CD4-positive, alpha-beta T cell (primary cell): ENCODE measurements at regions of chr7 and their contacts with region 1.

Region 1: DNA sequence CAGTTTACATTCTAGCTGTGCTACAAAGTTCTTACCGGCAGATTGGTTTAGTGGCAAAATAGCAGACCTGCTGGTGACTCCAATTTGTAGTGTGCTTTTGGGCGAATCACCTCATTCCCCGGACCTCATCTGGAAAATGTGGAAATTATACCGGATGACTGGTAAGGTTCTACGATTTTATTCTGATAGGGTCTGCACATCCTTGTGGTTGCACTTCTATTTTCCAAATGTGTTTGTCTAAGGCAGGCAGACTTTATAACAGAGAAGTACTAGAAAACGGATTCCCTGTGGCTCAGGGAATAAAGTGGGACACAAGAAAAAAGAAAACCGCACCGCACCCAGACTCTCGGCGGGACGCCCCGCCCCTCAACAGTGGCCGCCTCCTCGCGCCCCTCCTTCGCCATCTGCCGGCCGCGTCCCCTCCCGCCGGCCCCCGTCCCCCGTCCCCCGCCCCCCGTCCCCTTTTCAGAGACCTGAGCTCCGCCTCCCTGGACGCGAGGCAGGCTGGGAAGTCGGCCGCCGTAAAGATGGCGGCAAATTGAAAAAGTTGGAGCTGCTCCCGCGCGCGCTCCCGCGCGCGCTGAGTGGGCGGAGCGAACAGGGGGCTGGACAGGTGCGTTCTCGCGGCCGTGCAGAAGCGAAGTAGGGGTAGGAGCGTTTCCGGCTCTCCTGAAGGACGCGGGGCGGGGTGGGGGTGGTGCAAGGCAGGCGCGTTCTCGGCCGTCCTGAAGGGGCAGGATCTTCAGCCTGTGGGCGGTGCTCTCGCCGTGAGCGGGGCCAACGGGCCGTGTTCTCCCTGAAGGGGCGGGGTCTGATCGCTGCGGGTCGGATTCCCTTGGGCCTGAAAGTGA is 531 bp upstream of the CCM2 start:
- DNase-seq: peak; percentile 98 to 100 (median 99)
- ATAC-seq: peak; percentile 79
- H3K4me3 ChIP-seq: peak overlapping the region; percentile 69
- H3K4me3 Mint-ChIP-seq: peak overlapping the region; percentile 99
- H3K27ac ChIP-seq: peak overlapping the region; percentile 76 to 78
- H3K27ac Mint-ChIP-seq: peak overlapping the region; percentile 99
- H3K4me1 ChIP-seq: peaks cover 58% of the 10 kb centered on the region
- H3K4me1 Mint-ChIP-seq: peaks cover 52% of the 10 kb centered on the region
- H3K27me3 ChIP-seq: no peaks in the 10 kb centered on the region
- H3K27me3 Mint-ChIP-seq: no peaks in the 10 kb centered on the region
- CTCF ChIP-seq: no peak

Region 2: DNA sequence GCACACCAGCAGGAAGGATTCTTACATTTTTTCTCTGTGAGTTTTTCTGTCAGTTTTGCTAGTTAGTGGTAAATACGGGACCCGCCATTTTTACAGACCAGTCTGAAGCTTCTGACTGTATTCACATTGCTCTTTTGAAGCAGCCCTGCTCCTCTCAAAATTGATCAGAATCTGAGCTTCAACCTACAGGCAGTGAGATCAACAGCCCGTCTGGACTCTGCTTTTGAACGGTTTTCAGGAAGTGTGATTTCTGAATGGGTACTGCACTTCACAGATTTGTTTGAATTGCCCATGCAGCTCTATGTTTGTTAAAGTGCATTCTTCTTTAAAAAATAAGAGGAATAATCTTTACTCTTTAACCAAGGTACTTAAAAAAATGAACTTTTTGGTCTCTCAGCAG is 123.1 kb before region 1 on chr7:
- CTCF ChIA-PET with region 1: no interaction called
- POLR2A ChIA-PET with region 1: no interaction called
- intact Hi-C with region 1: no loop called
- DNase-seq: no peak
- ATAC-seq: no peak
- H3K4me3 ChIP-seq: no peak overlapping the region
- H3K4me3 Mint-ChIP-seq: no peak overlapping the region
- H3K27ac ChIP-seq: no peak overlapping the region
- H3K27ac Mint-ChIP-seq: peak overlapping the region; percentile 27
- H3K4me1 ChIP-seq: peaks cover 3% of the 10 kb centered on the region
- H3K4me1 Mint-ChIP-seq: peaks cover 27% of the 10 kb centered on the region
- H3K27me3 ChIP-seq: no peaks in the 10 kb centered on the region
- H3K27me3 Mint-ChIP-seq: no peaks in the 10 kb centered on the region
- CTCF ChIP-seq: no peak

Region 3: GRCh38 chr7:44973610-44974401 is 25.7 kb before region 1 on chr7:
- CTCF ChIA-PET with region 1: interaction called, 62 read pairs
- POLR2A ChIA-PET with region 1: interaction called, 104 read pairs
- intact Hi-C with region 1: loop called in 1 of 2 experiments (anchors 1 kb)
- DNase-seq: peak; percentile 45 to 78 (median 65)
- ATAC-seq: peak; percentile 48
- H3K4me3 ChIP-seq: no peak overlapping the region
- H3K4me3 Mint-ChIP-seq: peak overlapping the region; percentile 25
- H3K27ac ChIP-seq: peak overlapping the region in 1 of 2 donors; percentile 1
- H3K27ac Mint-ChIP-seq: peak overlapping the region; percentile 95
- H3K4me1 ChIP-seq: peaks cover 73% of the 10 kb centered on the region
- H3K4me1 Mint-ChIP-seq: peaks cover 45% of the 10 kb centered on the region
- H3K27me3 ChIP-seq: no peaks in the 10 kb centered on the region
- H3K27me3 Mint-ChIP-seq: no peaks in the 10 kb centered on the region
- CTCF ChIP-seq: peak; percentile 67

Region 4: DNA sequence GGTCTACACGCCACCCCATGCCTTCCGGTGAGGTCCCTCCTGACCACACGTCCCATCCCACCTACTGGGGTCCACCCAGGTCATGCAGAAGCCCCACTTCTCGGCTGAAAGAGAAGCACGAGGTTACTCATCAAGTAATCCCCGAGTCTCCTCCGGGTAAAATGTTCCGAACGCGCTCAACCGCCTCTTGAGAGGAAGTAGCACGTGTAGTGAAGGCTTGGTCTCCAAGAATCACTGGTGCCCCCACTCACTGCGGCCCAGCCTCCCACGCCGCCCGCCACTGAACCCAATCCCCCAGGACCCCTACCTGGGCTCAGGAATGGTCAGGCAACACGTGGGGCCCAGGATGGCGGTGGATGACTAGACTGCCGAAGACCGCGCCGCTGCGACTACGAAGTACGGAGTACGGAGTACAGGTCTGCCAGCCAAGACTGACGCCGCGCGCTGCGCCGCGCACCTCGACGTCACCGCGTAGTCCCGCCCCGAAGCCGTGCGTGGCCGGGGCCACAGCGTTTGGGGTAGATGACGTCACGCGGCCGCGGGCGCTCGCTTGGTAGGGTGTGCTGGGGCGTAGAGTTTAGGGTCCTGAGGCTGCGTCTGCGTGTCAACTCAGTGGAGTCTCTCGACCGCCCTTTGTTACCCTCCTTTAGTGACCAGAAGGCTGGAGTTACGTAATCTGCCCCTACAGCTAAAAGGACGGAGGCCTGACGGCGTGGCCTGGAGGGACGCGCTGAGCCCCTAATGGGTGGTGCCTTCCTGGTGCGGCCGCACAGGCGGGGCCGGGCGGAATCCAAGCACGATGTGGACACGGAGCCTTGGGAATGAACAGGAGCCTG is 13.0 kb before region 1 on chr7:
- CTCF ChIA-PET with region 1: interaction called, 6 read pairs
- POLR2A ChIA-PET with region 1: interaction called, 104 read pairs
- intact Hi-C with region 1: loop called (anchors 1 kb)
- DNase-seq: peak; percentile 86 to 99 (median 94)
- ATAC-seq: peak; percentile 93
- H3K4me3 ChIP-seq: peak overlapping the region; percentile 74
- H3K4me3 Mint-ChIP-seq: peak overlapping the region; percentile 95
- H3K27ac ChIP-seq: peak overlapping the region; percentile 94 to 95
- H3K27ac Mint-ChIP-seq: peak overlapping the region; percentile 95
- H3K4me1 ChIP-seq: peaks cover 52% of the 10 kb centered on the region
- H3K4me1 Mint-ChIP-seq: peaks cover 50% of the 10 kb centered on the region
- H3K27me3 ChIP-seq: no peaks in the 10 kb centered on the region
- H3K27me3 Mint-ChIP-seq: no peaks in the 10 kb centered on the region
- CTCF ChIP-seq: no peak

Region 5: GRCh38 chr7:45021604-45022296 is 22.3 kb after region 1 on chr7:
- CTCF ChIA-PET with region 1: interaction called, 6 read pairs
- POLR2A ChIA-PET with region 1: interaction called, 367 read pairs
- intact Hi-C with region 1: loop called in 1 of 2 experiments (anchors 2 kb)
- DNase-seq: peak in 3 of 14 experiments; percentile 27 to 41 (median 37)
- ATAC-seq: peak; percentile 39
- H3K4me3 ChIP-seq: no peak overlapping the region
- H3K4me3 Mint-ChIP-seq: peak overlapping the region; percentile 47
- H3K27ac ChIP-seq: no peak overlapping the region
- H3K27ac Mint-ChIP-seq: peak overlapping the region; percentile 66
- H3K4me1 ChIP-seq: peaks cover 28% of the 10 kb centered on the region
- H3K4me1 Mint-ChIP-seq: peaks cover 60% of the 10 kb centered on the region
- H3K27me3 ChIP-seq: no peaks in the 10 kb centered on the region
- H3K27me3 Mint-ChIP-seq: no peaks in the 10 kb centered on the region
- CTCF ChIP-seq: no peak

Region 6: GRCh38 chr7:45089341-45089891 is 89.9 kb after region 1 on chr7:
- CTCF ChIA-PET with region 1: no interaction called
- POLR2A ChIA-PET with region 1: no interaction called
- intact Hi-C with region 1: no loop called
- DNase-seq: peak; percentile 22 to 79 (median 53)
- ATAC-seq: peak; percentile 58
- H3K4me3 ChIP-seq: peak overlapping the region; percentile 42
- H3K4me3 Mint-ChIP-seq: peak overlapping the region; percentile 60
- H3K27ac ChIP-seq: no peak overlapping the region
- H3K27ac Mint-ChIP-seq: peak overlapping the region; percentile 12
- H3K4me1 ChIP-seq: peaks cover 10% of the 10 kb centered on the region
- H3K4me1 Mint-ChIP-seq: peaks cover 7% of the 10 kb centered on the region
- H3K27me3 ChIP-seq: peaks cover 11 to 17% of the 10 kb centered on the region in 2 experiments
- H3K27me3 Mint-ChIP-seq: peaks cover 18% of the 10 kb centered on the region
- CTCF ChIP-seq: no peak

Region 7: DNA sequence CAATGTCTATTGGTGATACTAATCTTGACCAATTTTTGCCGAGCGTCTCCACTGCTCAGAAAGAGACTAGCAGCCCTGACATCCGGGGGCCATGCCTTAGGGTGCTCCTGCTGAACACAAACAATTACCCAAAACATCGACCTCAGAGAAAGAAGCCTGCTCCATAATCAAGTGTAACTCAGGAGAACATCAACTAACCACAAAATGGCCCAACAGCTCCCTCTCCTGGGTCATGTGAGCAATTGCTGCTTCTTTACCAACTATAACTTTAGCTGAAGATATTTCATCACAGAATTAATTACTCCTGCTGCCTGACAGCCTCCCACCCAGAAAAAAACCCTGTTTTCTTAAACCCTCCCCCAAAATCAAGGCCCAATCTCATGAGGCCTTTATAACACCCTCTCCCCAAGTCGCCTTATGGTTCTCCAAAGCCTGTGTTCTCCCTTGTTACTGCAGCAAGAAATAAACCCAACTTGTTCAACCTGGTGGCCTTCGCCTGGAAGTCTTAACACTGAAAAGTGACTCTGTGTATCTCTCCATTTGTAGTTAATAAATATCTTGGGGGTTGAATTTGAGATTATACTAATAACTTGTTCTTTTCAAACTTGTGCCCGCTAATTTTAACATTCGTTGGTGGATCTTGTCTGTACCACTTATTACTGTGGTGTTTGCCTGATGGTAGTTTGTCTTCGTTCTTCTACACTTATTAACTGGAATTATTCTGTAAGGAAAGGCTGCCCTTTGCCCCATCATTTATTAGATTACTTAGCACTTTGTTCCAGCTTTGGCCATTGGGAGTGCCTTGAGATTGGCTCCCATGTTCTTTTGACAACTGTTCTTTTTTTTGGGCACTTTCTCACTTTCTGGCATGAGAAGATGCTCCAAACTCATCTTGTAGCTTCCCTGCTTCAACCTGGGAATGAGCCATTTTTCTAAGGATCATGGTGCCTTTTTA is 136.9 kb after region 1 on chr7:
- CTCF ChIA-PET with region 1: interaction called, 12 read pairs
- POLR2A ChIA-PET with region 1: interaction called, 4 read pairs
- intact Hi-C with region 1: no loop called
- DNase-seq: peak; percentile 48 to 91 (median 61)
- ATAC-seq: peak; percentile 99
- H3K4me3 ChIP-seq: no peak overlapping the region
- H3K4me3 Mint-ChIP-seq: no peak overlapping the region
- H3K27ac ChIP-seq: no peak overlapping the region
- H3K27ac Mint-ChIP-seq: no peak overlapping the region
- H3K4me1 ChIP-seq: peaks cover 9% of the 10 kb centered on the region
- H3K4me1 Mint-ChIP-seq: peaks cover 5% of the 10 kb centered on the region
- H3K27me3 ChIP-seq: no peaks in the 10 kb centered on the region
- H3K27me3 Mint-ChIP-seq: no peaks in the 10 kb centered on the region
- CTCF ChIP-seq: peak; percentile 80